AG04449 (cell line): ENCODE measurements at regions of chr3 and their contacts with region 1.

Region 1: DNA sequence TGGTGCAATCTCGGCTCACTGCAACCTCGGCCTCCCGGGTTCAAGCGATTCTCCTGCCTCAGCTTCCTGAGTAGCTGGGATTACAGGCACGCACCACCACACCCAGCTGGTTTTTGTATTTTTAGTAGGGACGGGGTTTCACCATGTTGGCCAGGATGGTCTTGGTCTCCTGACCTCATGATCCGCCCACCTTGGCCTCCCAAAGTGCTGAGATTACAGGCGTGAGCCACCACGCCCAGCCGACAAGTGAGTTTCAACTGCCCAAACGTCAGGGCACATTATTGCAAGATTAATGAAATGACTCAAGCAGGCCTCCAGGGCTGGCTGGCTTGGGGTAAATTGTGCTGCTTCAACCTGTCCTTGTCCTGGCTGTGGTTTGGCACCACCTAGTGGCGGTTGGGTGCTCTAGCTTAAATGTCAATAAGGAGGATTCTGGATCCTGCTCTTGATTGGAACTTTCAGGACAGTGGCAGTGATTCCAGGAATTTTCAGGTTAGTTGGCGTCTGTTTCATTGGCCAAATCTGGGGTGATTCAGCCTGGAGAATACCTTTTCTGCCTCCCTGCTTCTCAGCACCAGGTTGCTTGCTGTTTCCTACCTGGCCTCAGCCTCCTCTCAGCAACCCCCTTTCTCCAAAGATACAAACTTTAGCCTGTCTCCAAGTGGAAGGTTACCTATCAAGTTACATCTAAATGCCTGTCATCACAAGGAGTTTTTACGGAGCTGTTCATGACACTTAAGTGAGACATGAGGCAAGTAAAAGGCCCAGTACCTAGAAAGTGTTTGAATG is 32.4 kb upstream of the SACM1L start:
- DNase-seq: peak; percentile 63
- H3K4me3 ChIP-seq: no peak overlapping the region
- CTCF ChIP-seq: peak; percentile 87

Region 2: DNA sequence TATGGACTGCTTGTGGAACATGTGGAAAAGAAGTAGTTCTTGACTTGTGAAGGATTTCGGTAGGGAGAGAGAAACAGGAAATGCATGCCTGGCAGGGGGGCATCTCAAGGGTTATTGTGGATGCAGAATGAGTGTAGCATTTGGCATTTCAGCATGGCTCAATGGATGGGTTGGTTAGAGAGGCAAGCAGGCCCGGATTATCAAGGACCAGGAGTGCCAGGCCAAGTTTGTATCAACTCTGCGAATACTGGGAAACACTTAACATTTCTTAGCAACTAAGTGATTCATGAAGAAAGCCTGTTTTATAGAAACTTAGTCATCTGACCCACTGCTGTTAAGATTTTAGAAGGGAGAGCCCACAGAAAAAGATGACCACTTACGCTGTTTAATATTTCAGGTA is 861.6 kb before region 1 on chr3:
- CTCF ChIA-PET with region 1: no interaction called
- POLR2A ChIA-PET with region 1: no interaction called
- DNase-seq: no peak
- H3K4me3 ChIP-seq: no peak overlapping the region
- CTCF ChIP-seq: no peak

Region 3: GRCh38 chr3:45507820-45508317 is 148.9 kb before region 1 on chr3:
- CTCF ChIA-PET with region 1: interaction called, 481 read pairs
- POLR2A ChIA-PET with region 1: interaction called, 8 read pairs
- DNase-seq: no peak
- H3K4me3 ChIP-seq: no peak overlapping the region
- CTCF ChIP-seq: peak; percentile 79

Region 4: DNA sequence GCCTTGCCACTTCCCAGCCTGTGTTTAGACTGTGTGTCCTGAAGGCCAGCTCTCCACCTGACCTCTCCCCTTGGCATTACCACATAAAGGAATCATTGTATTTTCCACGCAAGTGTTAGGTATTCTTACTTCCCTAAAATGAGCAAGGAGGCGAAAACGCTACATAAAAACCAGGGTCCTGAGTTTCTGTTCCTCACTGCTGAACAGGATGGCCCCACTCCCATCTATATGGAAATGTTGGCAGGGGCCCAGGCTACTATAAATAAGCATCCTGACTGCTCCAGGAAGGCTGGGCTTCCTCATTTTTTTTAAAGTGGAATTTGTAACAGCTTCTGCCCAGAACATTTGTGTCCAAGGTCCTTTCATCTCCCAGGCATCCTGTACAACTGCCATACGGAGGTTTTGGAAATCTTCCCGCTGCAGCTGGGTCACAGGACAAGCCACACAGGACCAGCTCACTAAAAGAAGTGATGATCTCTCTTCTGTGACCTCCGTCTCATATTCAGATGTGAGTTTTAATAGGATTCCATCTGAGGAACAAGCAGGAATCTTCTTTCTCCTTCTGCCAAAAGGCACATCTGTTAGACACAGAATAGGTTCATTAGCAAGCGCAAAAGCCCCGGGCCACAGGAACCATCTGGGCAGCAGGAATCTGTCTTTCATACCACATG is 118.7 kb before region 1 on chr3:
- CTCF ChIA-PET with region 1: interaction called, 14 read pairs
- POLR2A ChIA-PET with region 1: no interaction called
- DNase-seq: no peak
- H3K4me3 ChIP-seq: no peak overlapping the region
- CTCF ChIP-seq: no peak

Region 5: DNA sequence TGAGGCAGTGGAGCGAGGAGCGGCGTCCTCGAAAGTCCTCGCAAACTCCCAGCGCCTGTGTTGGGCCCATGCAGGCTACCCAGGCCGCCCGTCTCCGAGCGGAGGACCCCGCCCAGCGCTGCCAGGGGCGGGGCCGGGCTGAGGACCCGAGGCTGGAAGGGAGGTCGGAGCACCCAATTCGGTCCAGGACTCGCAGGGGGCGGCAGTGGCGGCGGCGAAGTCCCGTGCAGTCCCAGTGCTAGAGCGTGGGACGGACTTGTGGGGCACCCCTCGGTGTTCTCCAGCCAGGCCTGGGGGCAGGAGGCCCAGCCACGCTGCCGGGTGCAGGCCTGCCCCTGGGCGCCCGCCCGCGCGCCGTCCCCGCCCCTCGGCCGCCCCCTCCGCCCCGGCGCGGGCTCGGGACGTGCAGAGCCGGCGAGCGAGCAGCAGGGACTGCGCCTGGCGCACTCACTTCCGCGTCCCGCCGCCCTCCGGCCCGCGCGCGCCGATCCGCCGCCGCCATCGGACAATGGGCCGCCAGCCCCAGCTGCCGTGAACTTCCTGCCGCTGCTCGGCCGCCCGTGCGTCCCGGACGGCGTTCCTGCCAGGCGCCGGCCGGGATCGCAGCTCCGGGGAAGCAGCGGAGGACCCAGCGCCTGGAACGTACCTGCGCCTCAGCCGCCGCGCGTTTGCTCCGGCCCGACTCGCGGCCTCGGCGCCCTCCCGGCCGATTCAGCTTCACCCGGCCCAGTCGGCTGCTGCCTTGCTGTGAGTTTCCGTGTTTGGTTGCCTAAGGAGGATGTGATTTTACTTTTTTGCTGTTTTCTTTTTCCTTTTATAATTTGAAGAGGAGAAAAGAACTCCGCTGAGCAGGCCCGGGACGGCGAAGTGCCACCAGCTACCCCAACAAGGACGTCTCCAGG is 62.8 kb before region 1 on chr3:
- CTCF ChIA-PET with region 1: interaction called, 52 read pairs
- POLR2A ChIA-PET with region 1: interaction called, 13 read pairs
- DNase-seq: no peak
- H3K4me3 ChIP-seq: peak overlapping the region; percentile 70
- CTCF ChIP-seq: no peak

Region 6: GRCh38 chr3:45640091-45640507 is 16.7 kb before region 1 on chr3:
- CTCF ChIA-PET with region 1: interaction called, 68 read pairs
- POLR2A ChIA-PET with region 1: interaction called, 13 read pairs
- DNase-seq: no peak
- H3K4me3 ChIP-seq: no peak overlapping the region
- CTCF ChIP-seq: no peak